ENCODE measurements at regions of chr1 and their contacts with region 1.

Region 1: GRCh38 chr1:85344256-85344694 is 67.8 kb upstream of the BCL10 start:
- DNase-seq: peak; percentile 44
- ATAC-seq: peak; percentile 99
- H3K4me3 ChIP-seq: no peak overlapping the region
- H3K27ac ChIP-seq: no peak overlapping the region
- H3K4me1 ChIP-seq: peaks cover 32% of the 10 kb centered on the region
- H3K27me3 ChIP-seq: no peaks in the 10 kb centered on the region
- CTCF ChIP-seq: peak; percentile 80
- EP300 ChIP-seq: no peak
- POLR2A ChIP-seq: no peak
- RAD21 ChIP-seq: peak; percentile 53

Region 2: GRCh38 chr1:85244271-85245061 is 99.8 kb before region 1 on chr1:
- CTCF ChIA-PET with region 1: no interaction called
- POLR2A ChIA-PET with region 1: no interaction called
- in situ Hi-C with region 1: no loop called
- intact Hi-C with region 1: no loop called
- DNase-seq: no peak
- ATAC-seq: no peak
- H3K4me3 ChIP-seq: no peak overlapping the region
- H3K27ac ChIP-seq: no peak overlapping the region
- H3K4me1 ChIP-seq: 0 out of 2 replicates have a peak, but pooled peaks cover 7% of the 10 kb centered on the region
- H3K27me3 ChIP-seq: no peaks in the 10 kb centered on the region
- CTCF ChIP-seq: no peak
- EP300 ChIP-seq: no peak
- POLR2A ChIP-seq: no peak
- RAD21 ChIP-seq: no peak

Region 3: DNA sequence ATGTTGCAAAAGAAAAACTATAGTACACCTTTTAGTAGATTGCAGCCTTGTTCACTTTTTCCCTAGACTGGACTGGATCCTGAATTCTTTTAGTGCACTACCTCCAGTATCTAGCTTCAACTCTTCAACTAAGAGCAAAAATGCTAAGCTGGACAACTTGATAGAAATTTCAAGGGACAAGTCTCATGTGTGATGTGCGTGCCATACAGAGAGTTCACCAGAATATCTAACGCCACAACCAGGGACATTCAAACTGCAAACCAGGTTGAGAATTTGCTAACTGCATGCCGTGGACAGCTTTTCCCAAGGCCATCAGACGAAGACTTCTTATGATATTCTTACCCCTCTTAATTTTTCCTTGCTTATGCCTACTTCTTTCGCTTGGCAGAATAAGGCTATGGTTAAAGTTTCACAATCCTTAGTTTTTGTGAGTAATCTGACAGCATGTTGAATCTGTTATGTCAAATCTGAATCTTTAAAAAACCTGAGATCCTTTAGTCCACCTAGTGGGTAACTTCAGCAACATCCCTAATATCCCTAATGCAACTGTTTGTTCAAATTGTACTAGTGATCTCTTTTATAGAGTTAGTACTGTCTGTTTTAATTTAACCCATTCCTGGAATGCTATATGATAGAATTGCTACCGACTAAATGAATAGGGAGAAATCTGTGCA is 54.3 kb after region 1 on chr1:
- CTCF ChIA-PET with region 1: no interaction called
- POLR2A ChIA-PET with region 1: no interaction called
- in situ Hi-C with region 1: no loop called
- intact Hi-C with region 1: loop called (anchors 2 kb)
- DNase-seq: no peak
- ATAC-seq: no peak
- H3K4me3 ChIP-seq: no peak overlapping the region
- H3K27ac ChIP-seq: no peak overlapping the region
- H3K4me1 ChIP-seq: peaks cover 7% of the 10 kb centered on the region; the same call in 1 of the 2 replicates
- H3K27me3 ChIP-seq: no peaks in the 10 kb centered on the region
- CTCF ChIP-seq: no peak
- EP300 ChIP-seq: no peak
- POLR2A ChIP-seq: no peak
- RAD21 ChIP-seq: no peak

Region 4: GRCh38 chr1:85464497-85465098 is 120.3 kb after region 1 on chr1:
- CTCF ChIA-PET with region 1: no interaction called
- POLR2A ChIA-PET with region 1: interaction called, 4 read pairs
- in situ Hi-C with region 1: no loop called
- intact Hi-C with region 1: loop called (anchors 1 kb)
- DNase-seq: peak; percentile 40
- ATAC-seq: peak; percentile 74
- H3K4me3 ChIP-seq: peak overlapping the region; percentile 89 to 93 (median 93)
- H3K27ac ChIP-seq: peak overlapping the region; percentile 83
- H3K4me1 ChIP-seq: peaks cover 49% of the 10 kb centered on the region
- H3K27me3 ChIP-seq: no peaks in the 10 kb centered on the region; a peak in 2 of 5 replicates
- CTCF ChIP-seq: no peak
- EP300 ChIP-seq: no peak
- POLR2A ChIP-seq: peak; percentile 61 to 78; a peak in 3 of 4 replicates
- RAD21 ChIP-seq: no peak

Region 5: DNA sequence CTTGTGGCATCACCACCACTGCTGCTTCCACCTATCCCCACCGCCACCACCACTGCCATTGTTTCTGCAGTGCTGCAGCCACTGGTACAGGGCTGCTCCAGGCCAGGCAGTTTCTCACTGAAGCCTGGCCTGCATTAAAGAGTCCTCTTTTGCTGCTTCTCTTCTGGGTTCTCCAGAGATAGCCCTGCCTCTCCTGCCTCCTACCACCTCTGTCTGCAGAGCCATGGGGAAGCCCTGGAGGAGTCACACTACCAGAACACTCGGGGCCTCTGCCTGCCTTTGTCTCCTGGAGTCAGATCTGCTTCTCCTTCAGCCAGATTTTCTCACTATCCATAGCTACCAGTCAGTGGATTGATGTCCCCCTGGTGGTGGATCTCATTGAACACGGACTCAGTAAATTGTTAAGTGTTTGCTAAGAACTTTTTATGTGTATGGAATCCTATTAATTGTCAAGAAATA is 158.4 kb after region 1 on chr1:
- CTCF ChIA-PET with region 1: interaction called, 6 read pairs
- POLR2A ChIA-PET with region 1: no interaction called
- in situ Hi-C with region 1: no loop called
- intact Hi-C with region 1: loop called (anchors 1 kb)
- DNase-seq: peak; percentile 70
- ATAC-seq: peak; percentile 98
- H3K4me3 ChIP-seq: peak overlapping the region; percentile 14 to 62 (median 30); a peak in 5 of 6 replicates
- H3K27ac ChIP-seq: no peak overlapping the region
- H3K4me1 ChIP-seq: peaks cover 18% of the 10 kb centered on the region
- H3K27me3 ChIP-seq: no peaks in the 10 kb centered on the region
- CTCF ChIP-seq: peak; percentile 73
- EP300 ChIP-seq: no peak
- POLR2A ChIP-seq: no peak
- RAD21 ChIP-seq: peak; percentile 36; the same call in 1 of the 2 replicates